ENCODE measurements at regions of chrX and their contacts with region 1.

Region 1: GRCh38 chrX:46582966-46583365 is 9.4 kb downstream of the CHST7 start:
- DNase-seq: peak in 1 of 2 donors; percentile 66
- H3K4me3 ChIP-seq: peak overlapping the region in 1 of 2 donors; percentile 15
- H3K27ac ChIP-seq: peak overlapping the region; percentile 63 to 67
- H3K4me1 ChIP-seq: peaks cover 0 to 19% of the 10 kb centered on the region in 2 donors
- H3K27me3 ChIP-seq: no peaks in the 10 kb centered on the region
- CTCF ChIP-seq: no peak

Region 2: DNA sequence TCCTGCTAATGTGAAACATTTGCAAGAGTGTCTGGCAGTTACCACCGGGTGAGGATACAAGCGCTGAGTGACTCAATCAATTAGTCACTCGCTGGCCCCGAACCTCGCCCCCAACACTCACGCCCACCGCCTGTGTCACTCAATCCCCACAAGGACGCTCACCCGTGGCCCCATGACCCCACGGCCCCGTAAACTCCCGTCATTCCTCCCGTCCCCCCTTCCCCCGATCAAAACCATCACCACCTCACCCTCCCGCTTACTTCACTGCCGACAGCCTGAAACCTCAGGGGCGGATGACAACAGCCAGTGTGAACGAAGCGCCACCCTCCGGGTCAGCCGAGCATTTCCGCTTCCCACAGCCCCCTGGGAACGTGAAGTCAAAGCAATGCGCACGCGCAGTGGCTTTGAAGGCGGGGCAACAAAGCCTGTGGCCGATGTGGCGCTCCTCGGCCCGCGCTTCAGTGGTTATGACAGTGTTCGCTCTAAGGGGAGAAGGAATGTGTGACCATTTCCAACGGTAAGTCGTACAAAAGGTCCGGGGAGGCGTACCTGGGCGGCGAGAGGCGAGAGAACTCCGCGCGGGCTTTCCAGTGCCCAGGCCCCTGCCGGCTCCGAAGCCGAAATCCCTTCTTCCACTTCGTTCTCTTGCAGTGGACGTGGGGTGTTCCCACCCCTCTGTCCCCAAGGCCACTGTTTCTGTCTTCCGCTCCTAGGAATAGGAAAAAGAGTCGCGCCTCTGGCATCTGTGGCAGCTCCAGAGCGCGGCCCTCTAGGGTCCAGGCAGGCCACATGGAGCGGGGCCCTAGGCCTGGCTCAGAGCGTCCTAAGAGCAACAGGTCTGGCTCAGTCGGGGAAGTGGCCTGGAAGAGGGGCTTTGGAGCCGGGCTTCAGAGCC is 37.6 kb before region 1 on chrX and contains the start of gene ZNF674:
- intact Hi-C with region 1: loop called (anchors 2 kb)
- DNase-seq: peak; percentile 60 to 94
- H3K4me3 ChIP-seq: peak within 1 kb of the TSS; percentile 56 to 80
- H3K27ac ChIP-seq: peak within 1 kb of the TSS; percentile 75 to 86
- H3K4me1 ChIP-seq: peaks cover 0 to 9% of the 10 kb centered on the region in 2 donors
- H3K27me3 ChIP-seq: no peaks in the 10 kb centered on the region
- CTCF ChIP-seq: peak; percentile 12 to 31 (median 29)
- total RNA-seq, gene ZNF674: 2.3 TPM

Region 3: GRCh38 chrX:46561824-46562657 is 20.9 kb before region 1 on chrX:
- intact Hi-C with region 1: no loop called
- DNase-seq: no peak
- H3K4me3 ChIP-seq: no peak overlapping the region
- H3K27ac ChIP-seq: no peak overlapping the region
- H3K4me1 ChIP-seq: peaks cover 0 to 3% of the 10 kb centered on the region in 2 donors
- H3K27me3 ChIP-seq: no peaks in the 10 kb centered on the region
- CTCF ChIP-seq: no peak